ENCODE measurements at regions of chr3 and their contacts with region 1.

Region 1: GRCh38 chr3:128095222-128095703 is 28.3 kb downstream of the RUVBL1 start:
- DNase-seq: peak; percentile 87
- H3K4me3 Mint-ChIP-seq: no peak overlapping the region
- H3K27ac Mint-ChIP-seq: no peak overlapping the region
- H3K4me1 Mint-ChIP-seq: peaks cover 14% of the 10 kb centered on the region
- H3K27me3 Mint-ChIP-seq: no peaks in the 10 kb centered on the region

Region 2: GRCh38 chr3:128112357-128112968 is 17.2 kb after region 1 on chr3:
- CTCF ChIA-PET with region 1: interaction called, 12 read pairs
- DNase-seq: peak; percentile 56
- H3K4me3 Mint-ChIP-seq: no peak overlapping the region
- H3K27ac Mint-ChIP-seq: peak overlapping the region; percentile 92
- H3K4me1 Mint-ChIP-seq: peaks cover 38% of the 10 kb centered on the region
- H3K27me3 Mint-ChIP-seq: no peaks in the 10 kb centered on the region

Region 3: GRCh38 chr3:128123538-128124368 is 28.5 kb after region 1 on chr3 and contains the start of gene RUVBL1:
- CTCF ChIA-PET with region 1: interaction called, 15 read pairs
- DNase-seq: peak; percentile 98
- H3K4me3 Mint-ChIP-seq: peak within 1 kb of the TSS; percentile 98
- H3K27ac Mint-ChIP-seq: peak within 1 kb of the TSS; percentile 94
- H3K4me1 Mint-ChIP-seq: peaks cover 29% of the 10 kb centered on the region
- H3K27me3 Mint-ChIP-seq: peaks cover 5% of the 10 kb centered on the region

Region 4: DNA sequence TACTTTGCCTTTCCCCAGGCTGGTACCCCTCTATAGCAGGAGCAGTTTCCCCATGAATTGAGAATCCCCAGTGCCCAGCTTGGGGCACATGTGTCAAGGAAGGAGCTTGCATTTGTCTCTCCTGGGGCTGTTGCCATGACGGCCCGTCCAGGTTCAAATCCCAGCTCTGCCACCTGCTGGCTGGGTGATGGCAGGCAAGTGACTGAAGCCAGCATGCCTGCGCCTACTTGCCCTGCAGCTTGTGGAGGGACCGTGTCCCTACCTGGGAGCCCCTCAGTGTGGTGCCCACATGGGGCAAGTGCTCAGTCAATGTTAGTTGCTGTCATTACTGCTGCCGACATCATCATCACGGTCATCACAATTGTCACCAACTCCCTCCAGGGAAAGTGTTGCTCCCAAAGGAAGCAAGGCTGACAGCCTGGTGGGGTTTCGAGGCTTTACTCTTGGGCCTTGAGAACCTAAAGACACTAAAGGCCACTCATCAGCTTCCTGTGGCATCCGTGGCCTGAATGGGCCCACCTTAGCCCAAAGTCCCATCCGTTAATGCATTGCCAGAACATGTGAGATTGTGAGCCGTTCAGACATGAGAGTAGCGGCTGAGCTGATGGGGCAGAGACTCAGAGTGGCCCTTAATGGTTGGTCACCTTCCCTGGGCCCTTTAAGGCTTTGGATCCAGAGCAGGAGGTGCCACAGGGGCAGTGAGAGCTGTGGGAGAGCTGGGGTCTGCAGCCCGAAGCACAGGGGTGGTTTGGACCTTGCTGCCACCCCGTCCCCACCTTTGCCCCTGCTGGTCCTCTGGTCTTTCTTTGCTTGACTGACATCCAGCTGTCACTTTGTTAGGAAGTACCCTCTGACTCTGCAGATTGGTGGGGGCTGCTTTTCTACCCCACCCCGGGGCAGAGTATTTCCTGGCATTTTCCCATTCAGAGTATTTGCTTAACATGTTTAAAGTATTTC is 227.1 kb after region 1 on chr3:
- CTCF ChIA-PET with region 1: interaction called, 19 read pairs
- DNase-seq: peak; percentile 77
- H3K4me3 Mint-ChIP-seq: no peak overlapping the region
- H3K27ac Mint-ChIP-seq: no peak overlapping the region
- H3K4me1 Mint-ChIP-seq: peaks cover 25% of the 10 kb centered on the region
- H3K27me3 Mint-ChIP-seq: no peaks in the 10 kb centered on the region

Measured in activated naive CD4-positive, alpha-beta T cell treated with anti-CD3 and anti-CD28 coated beads, Interleukin-2, amount 10 ng/mL, durations not matched to agents 7 days and 5 days (primary cell).